MCF 10A (cell line): ENCODE measurements at regions of chr1 and their contacts with region 1.

Region 1: DNA sequence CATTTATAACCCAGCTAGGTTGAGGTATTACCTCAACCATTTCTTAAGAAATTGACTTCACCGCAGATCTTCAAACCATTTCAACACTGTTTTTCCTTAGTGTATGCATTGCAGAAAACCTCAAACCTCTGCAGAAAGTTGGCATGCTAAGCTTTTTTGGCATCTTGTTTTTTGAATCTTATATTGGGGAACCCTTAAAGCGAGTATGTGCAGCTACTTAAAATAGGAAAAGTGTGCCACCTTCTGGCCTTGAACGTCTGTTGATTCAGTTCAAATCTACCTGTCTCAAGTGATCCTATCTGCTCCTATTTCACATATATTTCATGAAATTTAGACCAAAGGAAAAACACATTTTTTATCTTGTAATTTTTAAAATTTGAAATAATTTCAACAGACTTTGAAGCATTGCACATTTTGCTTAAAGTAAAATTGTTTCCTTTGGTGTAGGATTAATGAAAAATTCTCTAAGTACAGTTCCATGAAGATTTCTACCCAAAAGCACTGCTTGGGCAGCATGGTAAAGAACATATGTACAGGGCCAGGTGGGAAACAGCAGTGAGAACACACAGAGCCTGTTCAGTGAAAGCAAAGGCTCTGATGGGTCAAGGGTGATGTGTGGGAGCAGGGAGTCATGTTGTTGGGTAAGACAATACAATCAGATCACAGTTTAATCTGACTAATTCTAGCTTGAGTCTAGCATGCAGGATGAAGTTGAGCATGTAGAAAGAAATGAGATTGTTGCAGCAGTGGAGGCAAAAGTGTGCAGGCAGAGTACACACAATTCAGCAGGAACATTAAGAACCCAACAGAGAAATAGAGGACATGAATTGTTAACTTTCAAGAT is 17.2 kb downstream of the HENMT1 start:
- DNase-seq: peak; percentile 69
- H3K4me3 Mint-ChIP-seq: no peak overlapping the region
- H3K27ac Mint-ChIP-seq: no peak overlapping the region
- H3K4me1 Mint-ChIP-seq: peaks cover 7% of the 10 kb centered on the region
- H3K27me3 Mint-ChIP-seq: no peaks in the 10 kb centered on the region
- CTCF ChIP-seq: peak; percentile 51

Region 2: GRCh38 chr1:107782217-107782845 is 861.4 kb before region 1 on chr1:
- CTCF ChIA-PET with region 1: no interaction called
- POLR2A ChIA-PET with region 1: no interaction called
- intact Hi-C with region 1: loop called (anchors 5 kb)
- DNase-seq: peak; percentile 68
- H3K4me3 Mint-ChIP-seq: no peak overlapping the region
- H3K27ac Mint-ChIP-seq: no peak overlapping the region
- H3K4me1 Mint-ChIP-seq: no peaks in the 10 kb centered on the region
- H3K27me3 Mint-ChIP-seq: no peaks in the 10 kb centered on the region
- CTCF ChIP-seq: peak; percentile 60

Region 3: GRCh38 chr1:108521990-108522393 is 121.7 kb before region 1 on chr1:
- CTCF ChIA-PET with region 1: interaction called, 13 read pairs
- POLR2A ChIA-PET with region 1: no interaction called
- intact Hi-C with region 1: no loop called
- DNase-seq: no peak
- H3K4me3 Mint-ChIP-seq: no peak overlapping the region
- H3K27ac Mint-ChIP-seq: no peak overlapping the region
- H3K4me1 Mint-ChIP-seq: no peaks in the 10 kb centered on the region
- H3K27me3 Mint-ChIP-seq: peaks cover 29% of the 10 kb centered on the region
- CTCF ChIP-seq: no peak

Region 4: GRCh38 chr1:108570128-108570527 is 73.6 kb before region 1 on chr1:
- CTCF ChIA-PET with region 1: interaction called, 10 read pairs
- POLR2A ChIA-PET with region 1: no interaction called
- intact Hi-C with region 1: no loop called
- DNase-seq: peak; percentile 42
- H3K4me3 Mint-ChIP-seq: no peak overlapping the region
- H3K27ac Mint-ChIP-seq: no peak overlapping the region
- H3K4me1 Mint-ChIP-seq: no peaks in the 10 kb centered on the region
- H3K27me3 Mint-ChIP-seq: no peaks in the 10 kb centered on the region
- CTCF ChIP-seq: peak; percentile 34

Region 5: GRCh38 chr1:108615544-108615943 is 28.2 kb before region 1 on chr1:
- CTCF ChIA-PET with region 1: interaction called, 13 read pairs
- POLR2A ChIA-PET with region 1: no interaction called
- intact Hi-C with region 1: no loop called
- DNase-seq: no peak
- H3K4me3 Mint-ChIP-seq: no peak overlapping the region
- H3K27ac Mint-ChIP-seq: no peak overlapping the region
- H3K4me1 Mint-ChIP-seq: no peaks in the 10 kb centered on the region
- H3K27me3 Mint-ChIP-seq: no peaks in the 10 kb centered on the region
- CTCF ChIP-seq: no peak

Region 6: GRCh38 chr1:108671143-108671542 is 27.4 kb after region 1 on chr1:
- CTCF ChIA-PET with region 1: interaction called, 10 read pairs
- POLR2A ChIA-PET with region 1: no interaction called
- intact Hi-C with region 1: no loop called
- DNase-seq: no peak
- H3K4me3 Mint-ChIP-seq: no peak overlapping the region
- H3K27ac Mint-ChIP-seq: no peak overlapping the region
- H3K4me1 Mint-ChIP-seq: no peaks in the 10 kb centered on the region
- H3K27me3 Mint-ChIP-seq: peaks cover 18% of the 10 kb centered on the region
- CTCF ChIP-seq: no peak